CD8-positive, alpha-beta T cell (primary cell): ENCODE measurements at regions of chr17 and their contacts with region 1.

Region 1: DNA sequence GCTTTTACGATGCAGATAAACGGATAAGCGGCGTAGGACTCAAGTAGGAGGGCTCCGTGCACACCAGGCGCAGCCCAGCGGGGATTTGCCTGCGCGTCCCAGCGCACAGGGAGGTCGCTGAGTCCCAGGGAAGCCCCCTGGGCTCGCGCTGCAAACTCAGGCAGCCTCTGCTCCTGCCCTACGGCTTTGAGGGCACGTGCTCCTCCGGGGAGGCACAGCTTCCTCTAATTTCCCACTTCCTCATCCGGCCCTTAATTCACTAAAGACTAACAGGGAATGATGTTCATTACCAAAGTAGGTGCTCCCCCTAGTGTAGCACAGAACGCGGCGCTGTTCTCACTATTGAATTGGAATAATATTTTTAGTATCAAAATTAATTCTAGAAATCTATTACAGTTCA is 825.4 kb downstream of the KCNJ18 start:
- DNase-seq: no peak
- ATAC-seq: no peak
- H3K4me3 ChIP-seq: no peak overlapping the region
- H3K4me3 Mint-ChIP-seq: no peak overlapping the region
- H3K27ac ChIP-seq: no peak overlapping the region
- H3K27ac Mint-ChIP-seq: no peak overlapping the region
- H3K4me1 ChIP-seq: no peaks in the 10 kb centered on the region
- H3K4me1 Mint-ChIP-seq: no peaks in the 10 kb centered on the region
- H3K27me3 ChIP-seq: no peaks in the 10 kb centered on the region
- H3K27me3 Mint-ChIP-seq: no peaks in the 10 kb centered on the region
- CTCF ChIP-seq: no peak

Region 2: DNA sequence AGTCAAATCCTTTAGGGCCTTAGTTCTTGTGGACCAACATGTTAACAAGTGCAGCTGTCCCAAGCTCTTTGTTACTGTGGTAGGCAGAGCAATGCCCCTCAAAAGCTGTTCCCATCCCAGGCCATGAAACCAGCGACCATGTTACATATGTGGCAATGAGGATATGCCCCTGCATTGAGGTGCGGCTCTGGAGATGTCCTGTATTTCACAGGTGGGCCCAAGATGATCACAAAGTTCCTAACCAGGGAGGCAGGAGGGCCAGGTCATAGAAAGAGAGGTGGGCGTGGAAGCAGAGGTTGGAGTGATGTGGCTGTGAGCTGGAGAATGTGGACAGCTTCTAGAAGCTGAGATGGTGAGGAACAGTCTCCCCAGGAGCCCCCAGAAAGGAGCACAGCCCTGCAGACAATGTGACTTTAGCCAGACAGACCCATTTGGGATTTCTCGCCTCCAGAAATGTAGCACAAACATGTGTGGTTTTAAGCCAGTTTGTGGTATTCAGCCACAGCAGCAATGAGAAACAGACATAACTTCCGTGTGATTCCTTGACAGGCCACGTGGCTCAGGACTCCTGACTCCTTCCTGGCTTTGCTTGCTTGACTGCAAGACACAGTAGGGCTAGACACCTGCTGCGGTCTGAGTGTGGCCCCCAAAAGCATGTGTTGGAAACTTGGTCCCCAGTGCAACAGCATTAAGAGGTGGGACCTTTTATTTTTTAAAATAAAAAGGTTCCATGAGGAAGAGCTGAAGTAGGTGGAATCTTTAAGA is 47.1 kb before region 1 on chr17:
- CTCF ChIA-PET with region 1: no interaction called
- POLR2A ChIA-PET with region 1: no interaction called
- intact Hi-C with region 1: loop called in 1 of 2 experiments (anchors 5 kb)
- DNase-seq: no peak
- ATAC-seq: no peak
- H3K4me3 ChIP-seq: no peak overlapping the region
- H3K4me3 Mint-ChIP-seq: no peak overlapping the region
- H3K27ac ChIP-seq: no peak overlapping the region
- H3K27ac Mint-ChIP-seq: no peak overlapping the region
- H3K4me1 ChIP-seq: no peaks in the 10 kb centered on the region
- H3K4me1 Mint-ChIP-seq: no peaks in the 10 kb centered on the region
- H3K27me3 ChIP-seq: no peaks in the 10 kb centered on the region
- H3K27me3 Mint-ChIP-seq: no peaks in the 10 kb centered on the region
- CTCF ChIP-seq: no peak

Region 3: GRCh38 chr17:22600644-22601303 is 83.1 kb after region 1 on chr17:
- CTCF ChIA-PET with region 1: no interaction called
- POLR2A ChIA-PET with region 1: no interaction called
- intact Hi-C with region 1: no loop called
- DNase-seq: no peak
- ATAC-seq: no peak
- H3K4me3 ChIP-seq: no peak overlapping the region
- H3K4me3 Mint-ChIP-seq: no peak overlapping the region
- H3K27ac ChIP-seq: no peak overlapping the region
- H3K27ac Mint-ChIP-seq: no peak overlapping the region
- H3K4me1 ChIP-seq: no peaks in the 10 kb centered on the region
- H3K4me1 Mint-ChIP-seq: no peaks in the 10 kb centered on the region
- H3K27me3 ChIP-seq: no peaks in the 10 kb centered on the region
- H3K27me3 Mint-ChIP-seq: no peaks in the 10 kb centered on the region
- CTCF ChIP-seq: no peak